Sciatic nerve (tissue), 2 donors: ENCODE measurements at regions of chr3 and their contacts with region 1.

Region 1: GRCh38 chr3:175646865-175647264 is 787.7 kb downstream of the NAALADL2 start:
- DNase-seq: no peak
- ATAC-seq: no peak

Region 2: GRCh38 chr3:175502151-175502550 is 144.7 kb before region 1 on chr3:
- intact Hi-C with region 1: no loop called
- DNase-seq: no peak
- ATAC-seq: no peak

Region 3: DNA sequence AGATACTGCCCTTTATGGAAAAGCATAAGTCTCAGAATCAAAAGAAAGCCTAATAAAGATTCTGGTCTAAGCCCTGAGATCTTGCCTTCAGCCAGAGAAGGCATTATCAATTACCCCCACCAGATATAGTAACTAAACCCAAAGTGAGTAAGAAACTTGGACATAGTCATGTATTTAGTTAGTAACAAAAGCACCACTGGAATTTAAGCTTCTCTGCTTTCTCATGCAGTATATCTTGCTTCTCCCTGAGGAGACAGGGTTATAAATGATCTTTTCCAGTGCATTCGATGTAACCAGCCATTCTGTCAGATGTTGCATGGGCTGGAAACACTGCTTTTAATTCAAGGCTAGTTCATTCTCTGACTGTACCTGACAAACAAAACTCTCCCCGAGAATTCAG is 159.0 kb after region 1 on chr3:
- intact Hi-C with region 1: no loop called
- DNase-seq: no peak
- ATAC-seq: no peak

Region 4: DNA sequence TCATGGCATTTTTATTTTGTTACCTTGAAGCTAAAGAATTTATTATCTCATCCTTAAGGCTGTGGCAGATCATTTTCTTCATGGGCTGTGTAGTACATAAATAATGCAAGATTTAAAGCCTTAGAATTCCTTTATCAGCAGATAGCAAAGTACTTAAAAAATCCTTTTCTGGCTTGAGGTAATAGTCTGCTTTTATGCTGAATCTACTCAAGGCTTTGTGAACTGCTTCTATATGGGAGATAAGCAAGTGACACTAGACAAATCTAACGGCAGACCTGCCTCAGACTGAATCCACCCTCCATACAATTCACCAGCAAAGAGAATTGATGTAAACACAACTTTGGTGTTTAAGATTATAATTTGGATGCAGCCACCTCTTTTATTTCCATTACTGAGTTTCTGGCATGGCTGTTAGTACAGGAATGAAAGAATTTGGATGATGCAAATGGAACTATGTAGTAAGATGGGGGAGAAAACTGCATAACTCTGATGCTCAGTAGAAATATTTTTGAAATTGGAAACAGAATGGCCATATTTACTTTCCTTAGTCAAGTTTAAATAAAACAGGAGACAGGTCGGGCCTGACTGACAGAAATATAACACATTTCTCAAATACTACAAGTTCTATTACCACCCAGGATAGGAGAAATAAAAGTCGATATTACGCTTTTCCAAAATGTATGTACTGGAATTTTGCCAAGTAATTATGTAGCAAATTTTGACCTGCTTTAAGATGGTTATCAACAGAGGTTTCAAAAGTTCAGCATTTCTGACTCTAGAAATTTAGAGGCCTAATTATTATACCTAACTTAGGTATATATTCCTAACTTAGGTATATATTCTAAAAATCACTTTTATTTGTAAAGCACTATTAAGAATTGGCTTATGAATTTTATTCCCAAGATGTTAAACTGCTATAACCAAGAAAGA is 333.9 kb after region 1 on chr3:
- intact Hi-C with region 1: loop called (anchors 10 kb)
- DNase-seq: no peak
- ATAC-seq: no peak

Region 5: GRCh38 chr3:176055836-176056235 is 409.0 kb after region 1 on chr3:
- intact Hi-C with region 1: no loop called
- DNase-seq: no peak
- ATAC-seq: no peak